Left lung (tissue), 14 donors: ENCODE measurements at regions of chr3 and their contacts with region 1.

Region 1: GRCh38 chr3:196969660-196970546 is 1.3 kb upstream of the PIGZ start:
- DNase-seq: peak; percentile 59 to 96 (median 62)
- ATAC-seq: peak; percentile 93
- H3K4me3 ChIP-seq: peak overlapping the region; percentile 88 to 90
- H3K27ac ChIP-seq: peak overlapping the region; percentile 82 to 86
- H3K4me1 ChIP-seq: peaks cover 7 to 20% of the 10 kb centered on the region in 2 donors
- H3K27me3 ChIP-seq: no peaks in the 10 kb centered on the region
- CTCF ChIP-seq: peak; percentile 81 to 91

Region 2: GRCh38 chr3:196726788-196727675 is 242.9 kb before region 1 on chr3:
- intact Hi-C with region 1: no loop called
- DNase-seq: no peak
- ATAC-seq: no peak
- H3K4me3 ChIP-seq: no peak overlapping the region
- H3K27ac ChIP-seq: no peak overlapping the region
- H3K4me1 ChIP-seq: no peaks in the 10 kb centered on the region
- H3K27me3 ChIP-seq: no peaks in the 10 kb centered on the region
- CTCF ChIP-seq: no peak

Region 3: GRCh38 chr3:196837819-196838420 is 132.0 kb before region 1 on chr3:
- intact Hi-C with region 1: loop called in 1 of 2 experiments (anchors 5 kb)
- DNase-seq: peak in 2 of 4 donors; percentile 50 to 64
- ATAC-seq: peak; percentile 97
- H3K4me3 ChIP-seq: no peak overlapping the region
- H3K27ac ChIP-seq: no peak overlapping the region
- H3K4me1 ChIP-seq: peaks cover 0 to 6% of the 10 kb centered on the region in 2 donors
- H3K27me3 ChIP-seq: no peaks in the 10 kb centered on the region
- CTCF ChIP-seq: peak; percentile 83 to 84